ENCODE measurements at regions of chr7 and their contacts with region 1.

Region 1: DNA sequence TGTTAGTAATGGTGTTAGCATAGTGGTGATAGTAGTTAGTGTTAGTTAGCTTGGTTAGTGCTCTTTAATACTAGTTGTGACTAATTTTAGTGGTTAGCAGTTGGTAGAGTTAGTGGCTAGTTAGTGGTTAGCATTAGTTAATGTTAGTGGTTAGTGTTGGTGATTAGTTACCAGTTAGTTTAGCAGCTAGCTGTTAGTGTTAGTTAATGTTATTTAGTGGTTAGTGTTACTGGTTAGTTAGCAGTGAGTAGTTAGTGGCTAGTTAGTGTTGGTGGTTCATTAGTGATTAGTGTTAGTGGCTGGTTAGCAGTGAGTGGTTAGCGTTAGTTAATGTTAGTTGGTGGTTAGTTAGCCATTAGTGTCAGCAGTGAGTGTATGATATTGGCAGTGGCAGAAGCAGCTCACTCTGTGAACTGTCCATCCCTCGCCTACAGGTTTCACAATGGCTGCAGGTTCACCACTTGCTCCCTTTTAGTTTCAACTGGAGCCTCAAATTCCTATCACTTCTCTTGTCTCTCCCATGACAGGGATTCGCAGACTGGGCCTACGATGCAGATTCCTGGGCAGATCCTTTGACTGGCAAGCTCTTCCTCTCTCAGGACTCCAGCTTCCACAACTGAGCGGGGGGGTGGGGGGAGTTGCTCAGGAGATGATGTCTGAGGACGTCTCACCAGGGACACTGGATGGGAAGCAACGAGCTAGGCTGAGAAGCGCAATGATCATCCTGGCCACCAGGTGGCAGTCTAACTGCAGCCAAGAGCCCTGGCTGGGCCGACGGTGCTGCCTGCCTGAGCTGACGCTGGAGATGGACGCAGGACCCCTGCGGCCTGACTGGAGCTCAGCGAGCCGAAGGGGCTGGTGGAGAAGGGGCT is 19.5 kb downstream of the GHRHR start:
- DNase-seq: peak; percentile 82 to 90
- ATAC-seq: peak; percentile 82 to 94 (median 86)
- H3K4me3 ChIP-seq: no peak overlapping the region
- H3K27ac ChIP-seq: no peak overlapping the region
- H3K4me1 ChIP-seq: no peaks in the 10 kb centered on the region
- H3K27me3 ChIP-seq: peaks cover 0 to 4% (median 2%) of the 10 kb centered on the region in 3 donors
- CTCF ChIP-seq: peak; percentile 89

Region 2: GRCh38 chr7:31027161-31027965 is 44.1 kb after region 1 on chr7:
- intact Hi-C with region 1: no loop called
- DNase-seq: peak in 1 of 2 donors; percentile 20
- ATAC-seq: no peak
- H3K4me3 ChIP-seq: no peak overlapping the region
- H3K27ac ChIP-seq: no peak overlapping the region
- H3K4me1 ChIP-seq: no peaks in the 10 kb centered on the region
- H3K27me3 ChIP-seq: peaks cover 0 to 16% (median 3%) of the 10 kb centered on the region in 3 donors
- CTCF ChIP-seq: no peak

Region 3: DNA sequence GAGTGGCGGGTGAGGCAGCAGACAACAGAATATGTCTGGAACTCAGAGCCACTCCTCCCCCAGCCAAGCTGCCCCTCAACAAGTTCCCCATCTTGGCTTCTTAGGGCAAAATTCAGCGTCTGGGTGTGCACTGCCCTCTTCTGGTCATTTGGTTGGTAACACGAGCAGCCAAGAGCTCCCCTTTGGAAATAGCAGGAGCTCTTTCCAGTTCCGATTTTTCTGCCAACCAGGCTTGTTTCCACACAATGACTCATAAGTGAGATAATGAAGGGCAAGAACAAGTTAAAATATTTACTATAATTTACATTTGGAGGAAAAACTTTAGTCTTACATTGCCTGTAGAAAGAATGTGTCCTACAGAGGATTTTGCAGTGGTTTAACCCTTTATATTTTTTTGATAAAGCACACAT is 139.4 kb after region 1 on chr7:
- intact Hi-C with region 1: loop called (anchors 1 to 2 kb)
- DNase-seq: peak; percentile 43 to 66
- ATAC-seq: peak; percentile 57 to 85 (median 68)
- H3K4me3 ChIP-seq: no peak overlapping the region
- H3K27ac ChIP-seq: no peak overlapping the region
- H3K4me1 ChIP-seq: no peaks in the 10 kb centered on the region
- H3K27me3 ChIP-seq: no peaks in the 10 kb centered on the region
- CTCF ChIP-seq: peak; percentile 82

Region 4: GRCh38 chr7:31633894-31634494 is 650.7 kb after region 1 on chr7:
- intact Hi-C with region 1: loop called in 1 of 2 experiments (anchors 5 kb)
- DNase-seq: peak in 1 of 2 donors; percentile 12
- ATAC-seq: peak; percentile 67 to 90 (median 72)
- H3K4me3 ChIP-seq: no peak overlapping the region
- H3K27ac ChIP-seq: no peak overlapping the region
- H3K4me1 ChIP-seq: no peaks in the 10 kb centered on the region
- H3K27me3 ChIP-seq: no peaks in the 10 kb centered on the region
- CTCF ChIP-seq: peak; percentile 55

Region 5: GRCh38 chr7:31735991-31736982 is 753.0 kb after region 1 on chr7:
- intact Hi-C with region 1: loop called in 1 of 2 experiments (anchors 10 kb)
- DNase-seq: peak in 1 of 2 donors; percentile 30
- ATAC-seq: peak in 3 of 4 donors; percentile 57 to 65 (median 58)
- H3K4me3 ChIP-seq: no peak overlapping the region
- H3K27ac ChIP-seq: no peak overlapping the region
- H3K4me1 ChIP-seq: no peaks in the 10 kb centered on the region
- H3K27me3 ChIP-seq: peaks cover 0 to 6% (median 3%) of the 10 kb centered on the region in 3 donors
- CTCF ChIP-seq: peak; percentile 63